Left colon (tissue), 2 donors: ENCODE measurements at regions of chr6 and their contacts with region 1.

Region 1: DNA sequence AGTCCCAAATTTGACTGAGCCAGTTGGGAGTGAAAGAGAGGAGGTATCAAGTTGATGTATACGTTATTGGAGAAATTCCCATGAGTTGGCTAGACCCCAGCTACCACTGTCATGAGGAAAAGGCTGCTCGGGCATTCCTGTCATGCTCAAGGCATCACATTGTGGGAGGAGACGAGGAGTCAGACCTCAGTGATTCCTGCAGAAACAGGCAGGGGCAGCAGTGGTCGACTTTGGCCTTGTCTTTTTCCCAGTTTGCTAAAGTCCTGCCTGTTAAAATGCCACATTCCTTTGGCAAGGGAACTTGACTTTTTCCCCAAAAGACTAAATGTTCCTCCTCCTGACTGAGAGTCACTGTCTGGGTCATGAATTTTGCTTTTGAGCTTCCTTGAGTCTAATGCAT is 295.5 kb upstream of the HS3ST5 start:
- DNase-seq: no peak
- ATAC-seq: no peak

Region 2: DNA sequence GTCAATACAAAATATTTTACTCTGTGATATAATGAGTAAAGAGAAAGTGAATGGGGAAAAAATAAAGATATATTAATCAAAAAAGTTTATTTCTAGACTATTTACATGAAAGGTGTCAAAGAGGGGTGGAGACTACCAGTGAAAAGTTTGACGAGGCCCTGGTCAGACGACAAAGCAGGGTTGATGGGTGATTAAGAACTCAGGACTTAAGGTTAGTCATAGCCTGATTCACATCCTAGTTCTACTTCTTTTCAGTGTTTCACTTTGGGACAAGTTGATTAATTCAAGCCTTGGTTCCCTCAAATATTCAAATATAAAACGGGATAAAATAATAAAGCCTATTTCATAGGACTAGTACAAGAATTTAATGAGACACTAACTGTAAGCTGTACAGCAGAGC is 117.4 kb before region 1 on chr6:
- intact Hi-C with region 1: no loop called
- DNase-seq: no peak
- ATAC-seq: no peak

Region 3: GRCh38 chr6:114569669-114570068 is 68.7 kb before region 1 on chr6:
- intact Hi-C with region 1: no loop called
- DNase-seq: no peak
- ATAC-seq: no peak

Region 4: GRCh38 chr6:114650891-114651290 is 12.5 kb after region 1 on chr6:
- intact Hi-C with region 1: loop called in 1 of 2 experiments (anchors 2 kb)
- DNase-seq: no peak
- ATAC-seq: no peak

Region 5: GRCh38 chr6:114762145-114762544 is 123.8 kb after region 1 on chr6:
- intact Hi-C with region 1: no loop called
- DNase-seq: no peak
- ATAC-seq: no peak